ENCODE measurements at regions of chr15 and their contacts with region 1.

Region 1: DNA sequence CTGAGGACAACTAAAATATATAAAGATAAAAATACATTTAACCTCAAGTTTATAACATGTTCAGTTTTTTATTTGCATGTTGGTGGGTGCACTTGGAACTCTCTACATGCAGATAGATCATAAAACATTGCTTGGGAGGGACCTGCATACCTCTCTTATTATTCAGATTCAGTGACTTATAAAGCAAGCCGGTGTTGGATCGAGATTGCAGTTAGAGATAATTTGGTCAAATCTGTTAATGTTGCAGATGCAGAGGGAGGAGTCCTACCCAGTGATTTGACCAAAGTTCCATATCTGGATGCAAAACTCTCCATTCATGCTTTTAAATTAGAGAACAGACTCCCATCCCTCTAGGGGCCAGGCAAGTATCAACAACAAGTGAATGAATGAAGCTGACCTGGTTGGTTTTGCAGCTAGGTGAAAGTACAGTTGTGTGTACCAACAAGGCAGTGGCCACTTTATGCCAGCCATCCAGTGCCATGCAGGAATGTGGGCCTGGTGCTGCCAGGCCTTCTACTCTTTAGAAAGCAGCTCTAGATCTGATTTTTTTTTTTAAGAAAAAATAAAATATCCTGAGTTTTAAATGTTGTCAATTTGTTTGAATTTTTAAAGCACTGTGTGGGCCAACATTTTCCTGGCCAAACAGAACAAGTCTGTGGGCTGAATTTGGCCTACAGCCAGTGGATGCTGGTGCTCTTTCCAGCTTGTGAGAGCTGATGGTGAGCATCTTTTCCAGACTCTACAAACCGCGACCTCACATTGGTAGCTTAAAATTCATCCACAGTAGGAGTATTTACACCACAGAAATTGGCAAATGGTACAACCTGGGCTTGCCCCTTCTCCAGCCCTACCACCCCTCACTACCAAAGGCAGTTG is 12.3 kb downstream of the CDIN1 start:
- DNase-seq: no peak
- CTCF ChIP-seq: no peak

Region 2: DNA sequence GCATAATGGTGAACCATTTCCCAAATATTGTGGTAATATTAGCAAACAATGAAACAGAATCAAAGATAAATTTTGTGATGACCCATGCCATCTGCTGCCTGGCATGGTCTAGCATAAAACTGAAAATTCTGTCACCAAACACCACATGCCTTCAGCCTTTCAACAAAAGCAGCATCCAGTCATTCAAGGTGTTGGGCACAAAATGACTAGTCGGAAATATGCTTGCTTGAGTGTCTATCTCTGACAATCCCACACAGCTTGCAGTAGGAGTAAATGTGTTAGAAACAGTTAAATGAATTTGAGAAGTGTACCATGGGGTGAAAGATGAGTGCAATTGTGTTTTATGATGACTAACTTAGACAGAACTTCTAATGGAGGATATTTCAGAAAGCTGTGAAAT is 74.0 kb before region 1 on chr15:
- CTCF ChIA-PET with region 1: no interaction called
- POLR2A ChIA-PET with region 1: no interaction called
- DNase-seq: no peak
- CTCF ChIP-seq: no peak

Region 3: DNA sequence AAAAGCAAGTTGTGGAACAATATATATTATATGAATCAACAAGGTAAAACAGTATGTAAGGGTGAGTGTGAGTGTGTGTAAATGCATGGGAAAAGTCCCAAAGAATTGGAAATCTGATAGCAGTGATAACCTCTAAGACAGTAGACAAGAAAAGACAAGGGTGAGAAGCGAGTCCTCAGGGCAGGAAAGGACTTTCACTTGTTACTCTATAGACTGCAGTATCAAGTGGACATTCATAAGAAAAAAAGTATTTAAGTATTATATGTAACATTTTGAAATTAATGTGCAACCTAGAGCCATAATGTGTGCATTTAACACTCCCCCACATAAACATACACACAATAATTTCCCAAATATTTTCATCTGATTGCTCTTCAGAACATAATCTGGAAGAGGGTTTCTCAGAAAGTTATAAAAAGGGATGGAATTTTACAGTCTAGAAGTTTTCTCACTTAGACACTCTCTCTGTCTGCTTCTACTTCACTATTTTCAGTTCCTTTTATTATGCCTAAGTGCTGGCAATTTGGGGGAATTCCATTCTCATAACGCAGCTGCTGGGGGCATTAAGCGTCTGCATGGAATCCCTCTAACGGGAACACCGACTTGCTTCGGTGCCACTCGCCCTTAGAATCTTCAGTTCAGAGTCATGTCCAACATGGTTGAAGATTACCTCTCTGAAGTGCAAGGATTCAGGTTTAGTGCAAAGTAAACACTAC is 62.3 kb before region 1 on chr15:
- CTCF ChIA-PET with region 1: no interaction called
- POLR2A ChIA-PET with region 1: no interaction called
- DNase-seq: peak; percentile 20
- CTCF ChIP-seq: no peak

Region 4: GRCh38 chr15:36558921-36559320 is 32.9 kb before region 1 on chr15:
- CTCF ChIA-PET with region 1: no interaction called
- POLR2A ChIA-PET with region 1: no interaction called
- DNase-seq: no peak
- CTCF ChIP-seq: no peak

Region 5: GRCh38 chr15:36579792-36580431 is 11.9 kb before region 1 on chr15:
- CTCF ChIA-PET with region 1: interaction called, 14 read pairs
- POLR2A ChIA-PET with region 1: no interaction called
- DNase-seq: no peak
- CTCF ChIP-seq: no peak

Region 6: GRCh38 chr15:37002041-37002672 is 410.4 kb after region 1 on chr15:
- CTCF ChIA-PET with region 1: no interaction called
- POLR2A ChIA-PET with region 1: no interaction called
- DNase-seq: no peak
- CTCF ChIP-seq: no peak